GM12878 (cell line): ENCODE measurements at regions of chr20 and their contacts with region 1.

Region 1: DNA sequence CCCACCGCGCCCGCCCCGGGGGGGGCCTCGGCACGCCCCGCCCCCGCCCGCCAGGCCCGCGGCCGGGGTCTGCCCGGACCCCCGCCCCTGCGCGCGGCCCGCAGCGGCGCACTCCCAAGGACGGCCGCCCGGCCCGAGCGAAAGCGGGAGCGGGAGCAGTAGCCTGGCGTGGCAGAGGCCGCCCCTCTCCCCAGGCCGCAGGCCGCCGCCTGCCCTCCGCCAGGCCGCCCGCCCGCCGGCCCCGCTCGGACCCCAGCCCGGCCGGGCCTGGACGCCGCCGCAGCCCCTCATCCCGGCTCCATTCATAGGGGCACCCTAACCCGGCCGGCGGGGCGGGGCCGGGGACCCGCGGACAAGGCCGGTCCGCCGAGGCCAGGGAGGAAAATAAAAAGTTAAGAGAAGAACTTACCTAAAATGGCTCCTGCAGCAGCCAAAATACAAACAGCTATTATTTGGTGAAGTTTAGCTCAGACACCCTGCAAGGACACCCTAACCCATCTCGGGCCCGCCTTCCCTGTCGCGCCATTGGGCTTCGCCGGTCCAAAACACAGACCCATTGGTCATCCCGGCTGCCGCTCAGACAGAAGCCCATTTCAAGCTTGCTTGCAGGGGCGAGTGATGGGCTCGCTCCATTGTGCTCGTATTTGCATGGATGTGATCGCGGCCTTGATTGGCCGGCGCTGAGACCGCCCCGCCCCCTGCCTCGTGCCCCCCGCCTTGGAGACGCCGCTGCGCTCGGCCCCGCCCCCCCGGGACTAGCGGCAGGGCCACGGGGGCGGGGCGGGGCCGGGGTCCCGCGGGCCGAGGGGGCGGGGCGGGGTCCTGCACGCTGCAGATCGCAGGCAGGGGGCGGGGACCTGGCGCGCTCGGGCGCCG is at the start of gene CHD6:
- DNase-seq: peak; percentile 97
- ATAC-seq: peak; percentile 99
- H3K4me3 ChIP-seq: peak within 1 kb of the TSS; percentile 84
- H3K27ac ChIP-seq: peak within 1 kb of the TSS; percentile 81
- H3K4me1 ChIP-seq: no peaks in the 10 kb centered on the region; the same call in 1 of the 2 replicates
- H3K27me3 ChIP-seq: no peaks in the 10 kb centered on the region
- CTCF ChIP-seq: no peak
- EP300 ChIP-seq: no peak
- POLR2A ChIP-seq: no peak
- RAD21 ChIP-seq: no peak
- polyA plus RNA-seq, gene CHD6: 4.3 to 15.9 TPM

Region 2: DNA sequence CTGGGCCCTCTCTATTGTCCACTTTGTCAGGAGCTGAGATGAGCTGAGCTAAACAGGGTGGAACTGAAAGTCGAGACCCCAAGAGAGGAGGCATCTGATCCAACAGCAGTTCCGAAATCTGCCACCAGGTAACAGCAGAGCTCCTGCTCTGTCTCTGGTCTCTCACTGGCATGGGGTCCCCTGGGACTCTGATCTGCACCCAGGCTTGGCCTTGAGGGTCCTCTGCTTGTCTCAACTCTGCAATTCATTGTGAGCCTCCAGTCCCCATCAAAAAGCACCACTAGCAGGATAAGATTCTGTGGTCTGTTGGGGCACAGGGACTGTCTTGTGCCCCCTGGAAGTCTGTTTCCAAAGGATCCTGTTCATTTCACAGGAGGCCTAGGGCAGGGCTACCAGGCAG is 652.1 kb before region 1 on chr20:
- CTCF ChIA-PET with region 1: no interaction called
- POLR2A ChIA-PET with region 1: no interaction called
- RAD21 ChIA-PET with region 1: no interaction called
- SMC1A ChIA-PET with region 1: no interaction called
- in situ Hi-C with region 1: no loop called
- intact Hi-C with region 1: no loop called
- DNase-seq: no peak
- ATAC-seq: peak; percentile 56
- H3K4me3 ChIP-seq: no peak overlapping the region
- H3K27ac ChIP-seq: no peak overlapping the region
- H3K4me1 ChIP-seq: no peaks in the 10 kb centered on the region
- H3K27me3 ChIP-seq: no peaks in the 10 kb centered on the region; a peak in 1 of 4 replicates
- CTCF ChIP-seq: peak; percentile 43 to 60 (median 53); a peak in 5 of 6 replicates
- EP300 ChIP-seq: no peak
- POLR2A ChIP-seq: no peak
- RAD21 ChIP-seq: peak; percentile 50

Region 3: DNA sequence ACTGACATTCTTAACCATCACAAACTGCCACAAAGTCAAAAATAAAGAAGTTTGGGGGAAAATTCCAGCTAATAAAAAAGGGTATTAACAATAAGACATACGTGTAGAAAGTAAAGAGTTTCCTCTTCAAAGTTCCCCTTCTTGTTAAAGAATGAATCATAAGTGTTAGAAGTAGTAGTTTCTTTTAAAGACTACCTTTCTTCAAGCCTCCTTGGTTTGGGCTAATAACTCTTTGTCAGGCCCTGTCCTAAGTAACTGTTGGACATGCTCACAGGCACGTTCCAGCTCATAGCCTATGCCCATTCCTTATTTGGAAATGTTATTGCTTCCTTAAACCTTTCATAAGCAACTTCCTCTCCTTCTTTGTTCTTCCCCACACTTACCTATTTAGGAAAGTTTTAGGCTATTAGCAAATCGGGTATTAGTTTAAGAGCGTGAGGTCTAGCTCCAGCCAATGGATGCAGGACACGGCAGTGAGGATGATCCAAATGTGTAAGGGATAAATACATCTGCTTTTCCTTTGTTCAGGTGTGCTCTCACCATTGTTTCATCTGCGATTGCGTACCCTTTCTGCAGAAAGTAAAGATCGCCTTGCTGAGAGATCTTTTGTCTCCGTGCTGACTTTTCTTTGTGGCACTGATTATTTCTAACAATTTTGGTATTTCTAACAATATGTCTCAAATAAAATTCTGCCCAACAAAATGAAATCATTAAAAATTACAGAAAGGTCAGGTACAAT is 64.9 kb before region 1 on chr20:
- CTCF ChIA-PET with region 1: no interaction called
- POLR2A ChIA-PET with region 1: interaction called, 7 read pairs
- RAD21 ChIA-PET with region 1: interaction called, 33 read pairs
- SMC1A ChIA-PET with region 1: interaction called, 12 read pairs
- in situ Hi-C with region 1: no loop called
- intact Hi-C with region 1: no loop called
- DNase-seq: no peak
- ATAC-seq: peak; percentile 84
- H3K4me3 ChIP-seq: no peak overlapping the region
- H3K27ac ChIP-seq: peak overlapping the region; percentile 41
- H3K4me1 ChIP-seq: 0 out of 2 replicates have a peak, but pooled peaks cover 4% of the 10 kb centered on the region
- H3K27me3 ChIP-seq: no peaks in the 10 kb centered on the region
- CTCF ChIP-seq: no peak
- EP300 ChIP-seq: no peak
- POLR2A ChIP-seq: no peak
- RAD21 ChIP-seq: no peak

Region 4: DNA sequence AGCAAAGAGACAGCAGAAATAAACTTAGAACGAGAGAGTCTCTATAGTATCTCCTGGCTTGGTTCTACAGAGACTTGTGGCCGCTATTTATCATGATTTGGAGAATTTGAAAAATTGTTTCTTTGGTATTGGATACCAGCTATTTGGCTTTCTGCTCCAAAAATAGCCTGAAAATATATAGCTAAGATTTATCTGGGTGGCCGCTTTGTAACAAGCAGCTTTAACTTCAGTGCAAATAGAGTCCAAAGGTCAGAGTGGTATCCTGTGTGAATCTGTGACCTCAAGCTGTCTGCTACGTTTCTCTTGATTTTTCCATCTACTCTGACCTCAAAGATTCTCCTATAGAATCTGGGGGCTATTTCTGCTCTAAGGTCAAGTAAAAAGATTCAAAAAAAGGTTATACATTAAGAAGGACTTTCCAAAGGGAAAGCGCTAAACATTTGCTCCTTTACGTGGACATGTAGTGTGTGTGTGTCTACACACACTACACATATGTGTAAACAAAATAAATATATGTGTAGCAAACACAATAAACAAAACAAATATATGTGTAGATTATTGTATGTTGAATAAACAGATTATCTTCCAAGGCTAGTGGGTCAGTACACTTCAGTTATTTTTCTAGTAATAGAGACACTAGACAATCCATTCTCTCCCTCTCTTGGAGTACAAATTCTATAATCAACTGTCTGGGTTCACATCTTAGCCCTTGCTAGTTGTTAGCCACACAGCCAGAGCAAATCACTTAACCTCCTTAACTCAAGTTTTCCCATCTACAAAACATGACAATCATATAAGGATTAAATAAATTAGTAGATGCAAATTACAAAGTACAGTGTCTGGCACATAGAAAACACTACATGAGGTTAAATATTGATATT is 40.8 kb before region 1 on chr20:
- CTCF ChIA-PET with region 1: interaction called, 3 read pairs
- POLR2A ChIA-PET with region 1: interaction called, 5 read pairs
- RAD21 ChIA-PET with region 1: interaction called, 14 read pairs
- SMC1A ChIA-PET with region 1: interaction called, 9 read pairs
- in situ Hi-C with region 1: no loop called
- intact Hi-C with region 1: no loop called
- DNase-seq: no peak
- ATAC-seq: peak; percentile 85
- H3K4me3 ChIP-seq: no peak overlapping the region
- H3K27ac ChIP-seq: no peak overlapping the region
- H3K4me1 ChIP-seq: no peaks in the 10 kb centered on the region
- H3K27me3 ChIP-seq: no peaks in the 10 kb centered on the region
- CTCF ChIP-seq: no peak
- EP300 ChIP-seq: peak in 1 of 2 experiments; percentile 40; a peak in 1 of 4 replicates
- POLR2A ChIP-seq: no peak
- RAD21 ChIP-seq: no peak

Region 5: GRCh38 chr20:41592520-41593216 is 25.5 kb before region 1 on chr20:
- CTCF ChIA-PET with region 1: no interaction called
- POLR2A ChIA-PET with region 1: interaction called, 4 read pairs
- RAD21 ChIA-PET with region 1: no interaction called
- SMC1A ChIA-PET with region 1: interaction called, 12 read pairs
- in situ Hi-C with region 1: no loop called
- intact Hi-C with region 1: no loop called
- DNase-seq: no peak
- ATAC-seq: no peak
- H3K4me3 ChIP-seq: no peak overlapping the region
- H3K27ac ChIP-seq: no peak overlapping the region
- H3K4me1 ChIP-seq: no peaks in the 10 kb centered on the region
- H3K27me3 ChIP-seq: no peaks in the 10 kb centered on the region
- CTCF ChIP-seq: no peak
- EP300 ChIP-seq: no peak
- POLR2A ChIP-seq: no peak
- RAD21 ChIP-seq: no peak

Region 6: DNA sequence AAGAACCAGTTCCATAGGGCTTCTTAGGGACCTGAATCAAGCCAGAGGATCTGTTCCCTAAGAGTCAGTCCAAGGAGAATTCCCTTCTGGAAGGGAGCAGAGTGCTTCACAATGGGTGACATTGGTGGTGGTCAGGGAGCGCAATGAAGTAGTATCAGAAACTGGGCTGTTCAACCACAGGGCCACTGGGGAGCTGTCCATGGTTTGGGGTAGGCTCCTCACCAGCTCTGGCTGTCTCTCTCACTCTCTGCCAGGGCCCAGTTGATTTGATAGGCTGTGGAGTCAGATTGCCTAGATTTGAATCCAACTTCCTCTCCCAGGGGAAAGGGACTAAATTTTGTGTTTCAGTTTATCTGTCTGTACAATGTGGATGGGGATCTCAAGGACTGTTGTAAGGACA is 36.7 kb after region 1 on chr20:
- CTCF ChIA-PET with region 1: no interaction called
- POLR2A ChIA-PET with region 1: no interaction called
- RAD21 ChIA-PET with region 1: no interaction called
- SMC1A ChIA-PET with region 1: no interaction called
- in situ Hi-C with region 1: no loop called
- intact Hi-C with region 1: no loop called
- DNase-seq: no peak
- ATAC-seq: peak; percentile 53
- H3K4me3 ChIP-seq: no peak overlapping the region
- H3K27ac ChIP-seq: no peak overlapping the region
- H3K4me1 ChIP-seq: no peaks in the 10 kb centered on the region
- H3K27me3 ChIP-seq: no peaks in the 10 kb centered on the region
- CTCF ChIP-seq: no peak
- EP300 ChIP-seq: no peak
- POLR2A ChIP-seq: no peak
- RAD21 ChIP-seq: no peak

Region 7: DNA sequence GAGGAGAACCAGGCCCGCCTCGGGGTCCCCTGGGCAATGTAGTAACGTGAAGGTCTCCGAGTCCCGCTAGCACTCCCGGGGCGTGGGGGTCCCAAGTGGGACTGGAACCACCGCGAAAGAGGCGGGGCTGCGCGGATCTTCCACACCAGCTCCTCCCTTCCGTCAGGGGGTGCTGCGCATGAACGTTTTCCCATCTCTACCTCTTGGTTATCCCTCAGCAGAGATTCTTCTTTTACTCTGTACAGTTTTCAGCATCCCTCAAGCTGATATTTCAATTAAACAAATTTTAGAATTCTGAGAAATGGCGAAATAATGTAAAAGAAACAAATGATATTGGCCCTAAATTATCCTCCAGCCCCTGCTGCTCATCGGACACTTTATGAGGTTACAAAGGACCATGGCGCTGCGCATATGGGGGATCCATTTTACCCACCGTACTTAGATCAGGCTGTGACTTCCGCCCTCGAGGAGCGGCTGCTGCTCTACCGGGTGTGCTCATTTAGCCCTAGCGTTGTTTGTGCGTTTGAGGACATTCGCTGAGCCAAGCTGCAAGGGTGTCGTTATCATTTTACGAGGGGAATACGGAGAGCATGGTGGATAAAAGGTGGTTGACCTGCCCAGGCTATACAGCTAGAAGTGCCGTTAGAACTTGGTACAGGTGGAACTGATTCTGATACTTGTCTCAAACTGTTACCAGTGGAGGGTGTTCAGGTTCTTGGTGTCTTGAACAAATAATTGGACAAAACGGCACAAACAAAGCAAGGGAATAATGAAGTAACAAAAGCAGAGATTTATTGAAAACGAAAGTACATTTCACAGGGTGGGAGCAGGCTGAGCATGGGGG is 75.2 kb after region 1 on chr20:
- CTCF ChIA-PET with region 1: interaction called, 4 read pairs
- POLR2A ChIA-PET with region 1: interaction called, 4 read pairs
- RAD21 ChIA-PET with region 1: interaction called, 5 read pairs
- SMC1A ChIA-PET with region 1: interaction called, 5 read pairs
- in situ Hi-C with region 1: no loop called
- intact Hi-C with region 1: loop called (anchors 5 kb)
- DNase-seq: peak; percentile 82
- ATAC-seq: peak; percentile 95
- H3K4me3 ChIP-seq: peak overlapping the region; percentile 69
- H3K27ac ChIP-seq: peak overlapping the region; percentile 78
- H3K4me1 ChIP-seq: peaks cover 9% of the 10 kb centered on the region
- H3K27me3 ChIP-seq: no peaks in the 10 kb centered on the region
- CTCF ChIP-seq: peak in 2 of 3 experiments; percentile 25 to 43; a peak in 5 of 6 replicates
- EP300 ChIP-seq: no peak
- POLR2A ChIP-seq: peak; percentile 84
- RAD21 ChIP-seq: no peak

Region 8: GRCh38 chr20:41877911-41878310 is 259.7 kb after region 1 on chr20:
- CTCF ChIA-PET with region 1: no interaction called
- POLR2A ChIA-PET with region 1: no interaction called
- RAD21 ChIA-PET with region 1: no interaction called
- SMC1A ChIA-PET with region 1: no interaction called
- in situ Hi-C with region 1: no loop called
- intact Hi-C with region 1: no loop called
- DNase-seq: no peak
- ATAC-seq: no peak
- H3K4me3 ChIP-seq: no peak overlapping the region
- H3K27ac ChIP-seq: no peak overlapping the region
- H3K4me1 ChIP-seq: no peaks in the 10 kb centered on the region
- H3K27me3 ChIP-seq: no peaks in the 10 kb centered on the region; a peak in 1 of 4 replicates
- CTCF ChIP-seq: no peak
- EP300 ChIP-seq: no peak
- POLR2A ChIP-seq: no peak
- RAD21 ChIP-seq: no peak